B cell (primary cell): ENCODE measurements at regions of chr2 and their contacts with region 1.

Region 1: DNA sequence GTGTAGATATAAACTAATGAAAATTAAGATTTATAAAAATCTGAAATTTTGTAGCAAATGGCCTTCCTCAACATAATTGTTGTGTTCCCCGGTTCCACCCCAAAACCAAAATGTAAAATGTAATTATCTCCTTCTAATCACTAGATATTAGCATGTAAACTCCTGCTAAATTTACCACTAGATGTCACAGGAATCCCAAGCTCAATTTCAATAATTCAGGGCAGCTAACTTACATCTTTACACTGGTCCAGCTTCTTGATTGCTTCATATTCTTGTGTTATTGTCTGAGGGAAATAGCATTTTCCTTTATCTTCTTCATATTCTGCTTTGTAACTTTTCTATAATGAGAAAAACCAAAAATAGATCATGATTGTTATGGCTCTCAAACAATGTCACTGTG is 42.6 kb downstream of the NEB start:
- DNase-seq: peak; percentile 25
- ATAC-seq: no peak
- H3K4me3 ChIP-seq: no peak overlapping the region
- H3K4me3 Mint-ChIP-seq: no peak overlapping the region
- H3K27ac ChIP-seq: no peak overlapping the region
- H3K27ac Mint-ChIP-seq: no peak overlapping the region
- H3K4me1 ChIP-seq: no peaks in the 10 kb centered on the region
- H3K4me1 Mint-ChIP-seq: no peaks in the 10 kb centered on the region
- H3K27me3 ChIP-seq: no peaks in the 10 kb centered on the region
- H3K27me3 Mint-ChIP-seq: no peaks in the 10 kb centered on the region
- CTCF ChIP-seq: no peak

Region 2: GRCh38 chr2:151569170-151569569 is 122.5 kb before region 1 on chr2:
- CTCF ChIA-PET with region 1: no interaction called
- POLR2A ChIA-PET with region 1: no interaction called
- intact Hi-C with region 1: no loop called
- DNase-seq: no peak
- ATAC-seq: no peak
- H3K4me3 ChIP-seq: no peak overlapping the region
- H3K4me3 Mint-ChIP-seq: no peak overlapping the region
- H3K27ac ChIP-seq: no peak overlapping the region
- H3K27ac Mint-ChIP-seq: no peak overlapping the region
- H3K4me1 ChIP-seq: no peaks in the 10 kb centered on the region
- H3K4me1 Mint-ChIP-seq: no peaks in the 10 kb centered on the region
- H3K27me3 ChIP-seq: no peaks in the 10 kb centered on the region
- H3K27me3 Mint-ChIP-seq: no peaks in the 10 kb centered on the region
- CTCF ChIP-seq: no peak

Region 3: DNA sequence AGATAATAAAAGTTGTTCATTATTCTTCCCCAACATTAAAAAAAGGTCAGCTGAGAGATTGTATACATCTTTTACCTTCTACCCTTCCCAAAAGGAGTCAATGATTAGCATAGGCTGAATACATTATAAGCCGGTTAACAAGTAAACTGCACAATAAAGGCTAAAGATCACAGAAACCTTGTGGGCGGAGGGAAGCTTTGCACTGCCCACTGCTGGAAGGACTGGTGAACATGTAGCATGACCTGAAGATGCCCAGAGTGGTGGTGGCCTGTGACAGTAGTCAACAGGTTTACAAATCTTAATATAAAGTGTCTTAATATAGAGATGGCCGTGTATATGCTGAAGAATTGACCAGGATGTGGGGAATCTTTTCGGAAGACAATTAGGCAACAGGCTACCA is 101.0 kb after region 1 on chr2:
- CTCF ChIA-PET with region 1: interaction called, 12 read pairs
- POLR2A ChIA-PET with region 1: no interaction called
- intact Hi-C with region 1: loop called (anchors 5 kb)
- DNase-seq: peak; percentile 29
- ATAC-seq: peak; percentile 51
- H3K4me3 ChIP-seq: no peak overlapping the region
- H3K4me3 Mint-ChIP-seq: no peak overlapping the region
- H3K27ac ChIP-seq: no peak overlapping the region
- H3K27ac Mint-ChIP-seq: no peak overlapping the region
- H3K4me1 ChIP-seq: no peaks in the 10 kb centered on the region
- H3K4me1 Mint-ChIP-seq: peaks cover 9% of the 10 kb centered on the region
- H3K27me3 ChIP-seq: no peaks in the 10 kb centered on the region
- H3K27me3 Mint-ChIP-seq: no peaks in the 10 kb centered on the region
- CTCF ChIP-seq: no peak

Region 4: GRCh38 chr2:151808258-151809072 is 116.8 kb after region 1 on chr2:
- CTCF ChIA-PET with region 1: interaction called, 46 read pairs
- POLR2A ChIA-PET with region 1: interaction called, 3 read pairs
- intact Hi-C with region 1: loop called (anchors 1 kb)
- DNase-seq: peak; percentile 60
- ATAC-seq: peak; percentile 64
- H3K4me3 ChIP-seq: no peak overlapping the region
- H3K4me3 Mint-ChIP-seq: no peak overlapping the region
- H3K27ac ChIP-seq: peak overlapping the region in 1 of 2 donors; percentile 31
- H3K27ac Mint-ChIP-seq: no peak overlapping the region
- H3K4me1 ChIP-seq: peaks cover 4 to 11% of the 10 kb centered on the region in 2 donors
- H3K4me1 Mint-ChIP-seq: peaks cover 7% of the 10 kb centered on the region
- H3K27me3 ChIP-seq: no peaks in the 10 kb centered on the region
- H3K27me3 Mint-ChIP-seq: no peaks in the 10 kb centered on the region
- CTCF ChIP-seq: peak; percentile 94

Region 5: DNA sequence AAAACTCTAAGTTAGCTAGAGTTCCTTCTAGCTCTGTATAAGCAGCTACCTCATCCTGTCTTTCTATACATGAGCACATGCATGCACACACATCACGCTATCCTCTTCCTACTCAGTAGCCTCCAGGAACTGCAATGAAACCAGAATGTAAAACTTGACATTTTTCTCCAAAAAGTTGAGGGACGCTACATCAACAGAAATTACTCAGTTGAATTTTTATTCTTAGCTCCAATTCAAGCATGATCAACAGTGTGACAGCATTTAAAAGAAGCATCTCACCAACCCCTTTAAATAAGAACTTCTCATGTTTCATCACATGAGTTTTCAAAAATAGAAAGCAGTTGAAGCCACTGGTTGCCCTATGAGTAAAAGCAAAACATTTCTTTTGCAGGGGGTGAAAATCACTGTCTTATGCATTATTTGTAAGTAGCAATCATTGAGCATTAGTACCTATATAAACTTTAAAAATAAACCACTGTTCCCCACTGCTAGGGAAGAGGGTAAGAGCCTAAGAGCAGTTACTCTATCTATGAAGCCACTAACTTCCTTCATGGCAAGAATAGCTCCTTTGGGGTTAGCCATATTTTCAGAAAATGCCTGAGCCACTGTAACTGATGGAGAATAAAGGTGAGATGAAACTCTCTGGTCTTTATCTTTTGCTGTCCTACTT is 214.5 kb after region 1 on chr2:
- CTCF ChIA-PET with region 1: no interaction called
- POLR2A ChIA-PET with region 1: no interaction called
- intact Hi-C with region 1: no loop called
- DNase-seq: no peak
- ATAC-seq: no peak
- H3K4me3 ChIP-seq: no peak overlapping the region
- H3K4me3 Mint-ChIP-seq: no peak overlapping the region
- H3K27ac ChIP-seq: no peak overlapping the region
- H3K27ac Mint-ChIP-seq: no peak overlapping the region
- H3K4me1 ChIP-seq: peaks cover 0 to 4% of the 10 kb centered on the region in 2 donors
- H3K4me1 Mint-ChIP-seq: peaks cover 11% of the 10 kb centered on the region
- H3K27me3 ChIP-seq: no peaks in the 10 kb centered on the region
- H3K27me3 Mint-ChIP-seq: no peaks in the 10 kb centered on the region
- CTCF ChIP-seq: no peak

Region 6: GRCh38 chr2:151999053-151999452 is 307.4 kb after region 1 on chr2:
- CTCF ChIA-PET with region 1: interaction called, 5 read pairs
- POLR2A ChIA-PET with region 1: no interaction called
- intact Hi-C with region 1: loop called (anchors 5 kb)
- DNase-seq: peak; percentile 50
- ATAC-seq: peak; percentile 57
- H3K4me3 ChIP-seq: no peak overlapping the region
- H3K4me3 Mint-ChIP-seq: no peak overlapping the region
- H3K27ac ChIP-seq: no peak overlapping the region
- H3K27ac Mint-ChIP-seq: no peak overlapping the region
- H3K4me1 ChIP-seq: peaks cover 0 to under 1% of the 10 kb centered on the region in 2 donors
- H3K4me1 Mint-ChIP-seq: no peaks in the 10 kb centered on the region
- H3K27me3 ChIP-seq: no peaks in the 10 kb centered on the region
- H3K27me3 Mint-ChIP-seq: no peaks in the 10 kb centered on the region
- CTCF ChIP-seq: peak; percentile 89